IMR-90 (cell line): ENCODE measurements at regions of chr11 and their contacts with region 1.

Region 1: GRCh38 chr11:88051396-88051795 is 123.8 kb downstream of the RAB38 start:
- DNase-seq: peak; percentile 47
- ATAC-seq: no peak
- H3K4me3 ChIP-seq: no peak overlapping the region
- H3K27ac ChIP-seq: no peak overlapping the region
- H3K4me1 ChIP-seq: 0 out of 2 replicates have a peak, but pooled peaks cover 2% of the 10 kb centered on the region
- H3K27me3 ChIP-seq: no peaks in the 10 kb centered on the region
- CTCF ChIP-seq: no peak
- POLR2A ChIP-seq: no peak
- RAD21 ChIP-seq: no peak

Region 2: GRCh38 chr11:88068837-88069554 is 17.6 kb after region 1 on chr11:
- CTCF ChIA-PET with region 1: interaction called, 3 read pairs
- POLR2A ChIA-PET with region 1: interaction called, 17 read pairs
- dilution Hi-C with region 1: no loop called
- in situ Hi-C with region 1: no loop called
- intact Hi-C with region 1: no loop called
- DNase-seq: no peak
- ATAC-seq: no peak
- H3K4me3 ChIP-seq: no peak overlapping the region
- H3K27ac ChIP-seq: no peak overlapping the region
- H3K4me1 ChIP-seq: no peaks in the 10 kb centered on the region
- H3K27me3 ChIP-seq: no peaks in the 10 kb centered on the region
- CTCF ChIP-seq: no peak
- POLR2A ChIP-seq: no peak
- RAD21 ChIP-seq: no peak